Activated B cell treated with CpG ODN at 0.5 μM for 24 hours (primary cell): ENCODE measurements at regions of chr3 and their contacts with region 1.

Region 1: DNA sequence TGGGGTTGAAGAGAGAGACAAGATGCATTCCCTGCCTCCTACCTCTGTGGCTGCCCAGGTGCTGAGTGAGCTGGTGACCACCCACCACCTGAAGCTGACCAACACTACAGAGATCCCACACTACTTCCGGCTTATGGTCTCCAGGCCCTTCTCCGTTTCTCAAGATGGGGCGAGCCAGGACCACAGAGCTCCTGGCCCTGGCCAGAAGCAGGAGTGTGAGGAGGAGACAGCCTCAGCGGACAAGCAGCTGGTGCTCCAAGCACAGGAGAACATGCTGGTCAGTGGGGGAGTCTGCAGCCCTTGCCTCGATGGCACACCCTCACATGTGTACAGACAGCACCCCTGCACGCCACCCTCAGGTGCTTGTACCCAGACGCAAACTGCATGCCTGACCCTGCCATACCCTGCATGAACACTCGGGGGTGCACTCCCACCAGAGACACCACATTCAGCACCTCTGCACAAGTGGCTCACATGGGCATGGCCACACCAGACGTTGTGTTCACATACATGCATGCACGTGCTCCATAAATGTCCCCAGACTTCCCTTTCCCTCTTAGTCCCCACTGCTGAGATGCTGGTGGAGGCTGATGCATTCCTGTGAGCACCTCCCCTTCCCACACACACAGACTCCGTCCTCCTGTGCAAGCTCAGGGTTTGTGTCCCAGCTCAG is 19.0 kb downstream of the ACAA1 start:
- DNase-seq: peak; percentile 58
- ATAC-seq: peak; percentile 88
- H3K4me3 Mint-ChIP-seq: no peak overlapping the region
- H3K27ac Mint-ChIP-seq: no peak overlapping the region
- H3K4me1 Mint-ChIP-seq: peaks cover 16% of the 10 kb centered on the region
- H3K27me3 Mint-ChIP-seq: no peaks in the 10 kb centered on the region
- CTCF ChIP-seq: no peak

Region 2: DNA sequence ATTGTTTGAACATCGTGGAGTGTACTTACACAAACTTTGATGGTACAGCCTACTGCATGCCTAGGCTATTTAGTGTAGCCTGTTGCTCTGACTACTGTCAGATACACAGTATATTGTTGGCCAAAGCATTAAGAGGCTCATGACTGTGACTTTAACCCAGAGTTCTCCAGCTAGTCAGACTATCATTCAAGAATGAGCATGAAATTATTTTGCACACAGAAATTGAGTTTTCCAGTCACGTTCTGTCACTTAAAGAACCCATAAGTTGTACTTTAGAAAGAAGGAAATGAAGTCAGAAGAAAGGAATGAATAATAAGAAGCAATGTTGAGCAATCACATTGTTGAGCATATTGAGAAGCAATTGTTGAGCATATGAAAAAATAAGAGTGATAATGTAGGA is 110.1 kb after region 1 on chr3:
- CTCF ChIA-PET with region 1: no interaction called
- POLR2A ChIA-PET with region 1: no interaction called
- intact Hi-C with region 1: loop called (anchors 5 kb)
- DNase-seq: no peak
- ATAC-seq: no peak
- H3K4me3 Mint-ChIP-seq: no peak overlapping the region
- H3K27ac Mint-ChIP-seq: no peak overlapping the region
- H3K4me1 Mint-ChIP-seq: peaks cover 6% of the 10 kb centered on the region
- H3K27me3 Mint-ChIP-seq: no peaks in the 10 kb centered on the region
- CTCF ChIP-seq: no peak

Region 3: GRCh38 chr3:38297947-38298711 is 180.2 kb after region 1 on chr3:
- CTCF ChIA-PET with region 1: interaction called, 32 read pairs
- POLR2A ChIA-PET with region 1: interaction called, 3 read pairs
- intact Hi-C with region 1: loop called (anchors 1 kb)
- DNase-seq: no peak
- ATAC-seq: no peak
- H3K4me3 Mint-ChIP-seq: no peak overlapping the region
- H3K27ac Mint-ChIP-seq: no peak overlapping the region
- H3K4me1 Mint-ChIP-seq: no peaks in the 10 kb centered on the region
- H3K27me3 Mint-ChIP-seq: peaks cover 14% of the 10 kb centered on the region
- CTCF ChIP-seq: no peak

Region 4: GRCh38 chr3:38346587-38347410 is 228.9 kb after region 1 on chr3 and contains the start of gene XYLB:
- CTCF ChIA-PET with region 1: interaction called, 12 read pairs
- POLR2A ChIA-PET with region 1: no interaction called
- intact Hi-C with region 1: loop called (anchors 2 kb)
- DNase-seq: peak; percentile 72
- ATAC-seq: peak; percentile 97
- H3K4me3 Mint-ChIP-seq: peak within 1 kb of the TSS; percentile 81
- H3K27ac Mint-ChIP-seq: no peak within 1 kb of the TSS
- H3K4me1 Mint-ChIP-seq: peaks cover 4% of the 10 kb centered on the region
- H3K27me3 Mint-ChIP-seq: no peaks in the 10 kb centered on the region
- CTCF ChIP-seq: no peak
- total RNA-seq, gene XYLB: 1.3 and 1.8 TPM in 2 replicates

Region 5: GRCh38 chr3:38479431-38480092 is 361.7 kb after region 1 on chr3:
- CTCF ChIA-PET with region 1: interaction called, 7 read pairs
- POLR2A ChIA-PET with region 1: no interaction called
- intact Hi-C with region 1: loop called (anchors 1 kb)
- DNase-seq: no peak
- ATAC-seq: peak; percentile 71
- H3K4me3 Mint-ChIP-seq: no peak overlapping the region
- H3K27ac Mint-ChIP-seq: no peak overlapping the region
- H3K4me1 Mint-ChIP-seq: no peaks in the 10 kb centered on the region
- H3K27me3 Mint-ChIP-seq: no peaks in the 10 kb centered on the region
- CTCF ChIP-seq: peak; percentile 83